Motor neuron (in vitro differentiated cells): ENCODE measurements at regions of chr19 and their contacts with region 1.

Region 1: DNA sequence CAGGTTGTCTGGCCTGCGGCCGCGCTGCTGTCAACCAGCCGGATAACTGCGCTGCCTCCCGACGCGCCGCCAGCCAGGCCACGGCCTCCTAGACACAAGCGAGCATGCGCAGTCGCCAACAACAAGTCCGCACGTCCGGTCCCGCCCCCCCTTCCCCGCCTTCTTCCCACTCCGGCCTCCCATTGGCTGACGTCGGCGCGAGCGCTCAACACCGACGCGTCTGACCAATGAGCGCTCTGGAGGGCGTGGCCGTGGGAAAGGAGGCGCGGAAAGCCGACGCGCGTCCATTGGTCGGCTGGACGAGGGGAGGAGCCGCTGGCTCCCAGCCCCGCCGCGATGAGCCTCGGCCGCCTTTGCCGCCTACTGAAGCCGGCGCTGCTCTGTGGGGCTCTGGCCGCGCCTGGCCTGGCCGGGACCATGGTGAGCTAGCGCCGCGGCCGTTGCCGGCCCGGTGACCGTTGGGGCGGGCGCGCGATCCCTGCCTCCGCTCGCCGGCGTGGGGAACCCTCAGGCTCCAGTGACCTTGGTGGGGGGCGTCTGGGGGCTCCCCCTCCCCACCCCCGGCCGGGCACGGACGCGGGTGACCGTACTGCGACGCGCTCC is at the start of gene GPX4:
- ATAC-seq: peak; percentile 36 to 88 (median 82)
- H3K4me3 ChIP-seq: peak within 1 kb of the TSS; percentile 66 to 99 (median 90)
- H3K27ac ChIP-seq: peak within 1 kb of the TSS; percentile 92 to 97
- H3K4me1 ChIP-seq: peaks cover 22 to 29% of the 10 kb centered on the region in 2 donors
- total RNA-seq, gene GPX4: 331 to 509 (median 399) TPM

Region 2: DNA sequence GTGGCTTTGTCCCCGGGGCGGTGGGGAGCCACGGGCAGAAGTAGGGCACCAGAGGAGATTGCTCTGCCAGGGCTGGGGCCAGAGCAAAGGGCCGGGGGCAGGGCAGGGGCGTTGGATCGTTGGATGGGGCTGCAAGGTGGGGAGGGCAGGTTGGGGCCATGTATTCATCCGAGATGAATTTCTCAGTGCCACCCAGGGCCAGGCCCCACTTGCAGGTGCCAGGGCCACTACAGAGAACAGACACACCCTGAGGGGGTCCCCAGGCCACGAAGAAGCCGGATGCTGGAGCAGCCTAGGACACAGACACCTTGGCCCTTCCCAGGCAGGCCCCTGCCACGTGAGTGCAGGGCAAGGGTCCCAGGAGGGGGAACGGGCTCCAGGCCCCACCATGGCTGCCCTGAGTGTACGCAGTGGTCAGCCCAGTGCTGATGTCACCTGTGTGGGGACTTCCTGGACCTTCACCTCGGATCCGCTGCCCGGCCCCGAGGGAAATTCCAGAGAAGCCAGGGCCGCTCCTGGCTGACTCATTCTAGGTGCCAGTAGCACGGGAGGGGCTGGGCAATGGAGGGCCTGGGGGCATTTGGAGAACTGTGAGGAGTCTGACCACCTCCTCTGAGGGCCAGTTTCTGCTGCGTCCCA is 79.8 kb after region 1 on chr19:
- in situ Hi-C with region 1: loop called in 1 of 9 experiments (anchors 10 kb)
- ATAC-seq: peak; percentile 9 to 53 (median 30)
- H3K4me3 ChIP-seq: no peak overlapping the region
- H3K27ac ChIP-seq: no peak overlapping the region
- H3K4me1 ChIP-seq: peaks cover 0 to 3% of the 10 kb centered on the region in 2 donors

Region 3: GRCh38 chr19:1189419-1189818 is 85.6 kb after region 1 on chr19:
- in situ Hi-C with region 1: loop called in 2 of 9 experiments (anchors 10 kb)
- ATAC-seq: peak in 1 of 8 experiments; percentile 14
- H3K4me3 ChIP-seq: no peak overlapping the region
- H3K27ac ChIP-seq: no peak overlapping the region
- H3K4me1 ChIP-seq: peaks cover 0 to 3% of the 10 kb centered on the region in 2 donors